ENCODE measurements at regions of chr3 and their contacts with region 1.

Region 1: DNA sequence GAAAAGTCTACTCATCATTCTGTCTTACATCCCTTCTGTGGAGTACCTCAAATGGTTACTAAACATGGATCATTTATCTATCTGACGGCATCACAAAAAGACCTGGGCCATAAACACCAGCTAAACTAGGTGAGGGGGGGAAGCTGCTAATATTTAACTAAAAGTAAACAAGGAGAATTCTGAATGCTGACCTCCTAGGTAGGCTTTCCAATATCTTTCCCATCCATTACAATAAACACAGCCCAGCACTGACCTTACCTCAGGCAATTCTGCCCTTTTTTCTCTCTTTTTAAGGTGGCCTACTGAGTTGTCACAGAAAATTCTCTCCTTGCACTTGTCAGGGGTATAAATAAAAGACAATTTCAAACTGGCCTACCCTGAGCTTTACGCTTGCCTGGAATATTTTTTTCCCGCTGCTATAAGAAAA is 33.1 kb downstream of the USF3 start:
- DNase-seq: peak; percentile 43 to 67
- H3K4me3 ChIP-seq: no peak overlapping the region
- H3K4me3 Mint-ChIP-seq: peak overlapping the region; percentile 39
- H3K27ac Mint-ChIP-seq: peak overlapping the region; percentile 75
- H3K4me1 ChIP-seq: peaks cover 30% of the 10 kb centered on the region
- H3K4me1 Mint-ChIP-seq: peaks cover 20% of the 10 kb centered on the region
- H3K27me3 ChIP-seq: no peaks in the 10 kb centered on the region
- H3K27me3 Mint-ChIP-seq: no peaks in the 10 kb centered on the region
- CTCF ChIP-seq: no peak

Region 2: DNA sequence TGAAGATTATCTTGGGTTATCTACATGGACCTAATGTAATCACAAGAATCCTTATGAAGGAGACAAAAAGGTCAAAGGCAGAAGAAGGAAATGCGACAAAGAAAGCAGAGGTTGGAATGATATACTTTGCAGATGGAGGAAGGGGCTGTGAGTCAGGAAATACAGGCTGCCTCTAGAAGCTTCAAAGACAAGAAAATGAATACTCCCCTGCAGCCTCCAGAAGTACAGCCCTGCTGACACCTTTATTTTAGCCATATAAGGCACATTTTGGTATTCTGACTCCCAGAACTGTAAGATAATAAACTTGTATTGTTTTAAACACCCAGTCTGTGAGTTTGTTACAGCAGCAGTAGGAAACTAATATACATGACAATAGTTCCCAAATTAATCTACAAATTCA is 72.4 kb before region 1 on chr3:
- CTCF ChIA-PET with region 1: no interaction called
- POLR2A ChIA-PET with region 1: no interaction called
- intact Hi-C with region 1: no loop called
- DNase-seq: no peak
- H3K4me3 ChIP-seq: no peak overlapping the region
- H3K4me3 Mint-ChIP-seq: no peak overlapping the region
- H3K27ac Mint-ChIP-seq: no peak overlapping the region
- H3K4me1 ChIP-seq: no peaks in the 10 kb centered on the region
- H3K4me1 Mint-ChIP-seq: no peaks in the 10 kb centered on the region
- H3K27me3 ChIP-seq: no peaks in the 10 kb centered on the region
- H3K27me3 Mint-ChIP-seq: no peaks in the 10 kb centered on the region
- CTCF ChIP-seq: no peak

Region 3: GRCh38 chr3:113676261-113676660 is 12.9 kb after region 1 on chr3:
- CTCF ChIA-PET with region 1: no interaction called
- POLR2A ChIA-PET with region 1: no interaction called
- intact Hi-C with region 1: no loop called
- DNase-seq: no peak
- H3K4me3 ChIP-seq: no peak overlapping the region
- H3K4me3 Mint-ChIP-seq: no peak overlapping the region
- H3K27ac Mint-ChIP-seq: no peak overlapping the region
- H3K4me1 ChIP-seq: no peaks in the 10 kb centered on the region
- H3K4me1 Mint-ChIP-seq: no peaks in the 10 kb centered on the region
- H3K27me3 ChIP-seq: no peaks in the 10 kb centered on the region
- H3K27me3 Mint-ChIP-seq: no peaks in the 10 kb centered on the region
- CTCF ChIP-seq: no peak

Region 4: DNA sequence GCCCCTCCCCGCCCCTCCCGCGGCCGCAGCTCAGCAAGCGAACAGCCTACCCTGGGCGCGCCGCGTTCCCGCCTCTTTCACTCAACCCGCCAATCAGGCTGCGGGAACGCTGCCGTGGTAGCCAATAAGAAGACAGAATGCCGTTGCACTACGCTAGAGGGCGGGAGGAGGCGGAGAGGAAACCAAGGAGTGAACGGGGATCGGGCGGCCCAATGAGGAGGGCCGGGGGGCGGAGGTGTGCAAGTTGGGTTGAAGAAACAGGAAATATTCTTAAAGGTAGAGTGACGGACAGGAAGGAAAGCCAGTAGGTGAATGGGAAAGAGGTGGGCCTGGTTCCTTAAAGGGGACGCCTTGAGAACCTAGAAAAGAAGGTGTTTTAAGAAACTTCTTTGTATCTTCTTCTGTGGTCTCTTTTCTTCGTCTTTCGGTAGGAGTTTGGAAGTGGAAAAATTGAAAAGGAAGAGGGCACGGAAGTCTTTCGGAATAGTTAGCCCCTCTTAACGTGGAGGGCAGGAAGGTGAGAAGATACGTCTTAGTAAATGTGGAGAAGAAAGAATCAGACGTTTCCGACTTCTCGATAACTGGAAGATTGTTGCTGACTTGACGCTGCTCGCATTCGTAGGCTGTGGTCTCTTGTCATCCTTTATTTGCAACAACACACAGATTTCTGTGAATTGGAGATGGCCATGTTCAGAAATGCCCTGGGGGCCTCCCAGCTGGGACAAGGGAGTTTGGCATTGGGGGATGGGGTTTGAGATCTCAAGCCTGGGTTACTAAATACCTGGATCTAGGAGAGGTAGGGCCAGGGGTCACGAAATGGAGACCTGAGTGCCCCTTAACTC is 33.5 kb after region 1 on chr3:
- CTCF ChIA-PET with region 1: no interaction called
- POLR2A ChIA-PET with region 1: interaction called, 3 read pairs
- intact Hi-C with region 1: loop called (anchors 1 kb)
- DNase-seq: peak; percentile 99
- H3K4me3 ChIP-seq: peak overlapping the region; percentile 84
- H3K4me3 Mint-ChIP-seq: no peak overlapping the region
- H3K27ac Mint-ChIP-seq: no peak overlapping the region
- H3K4me1 ChIP-seq: peaks cover 18% of the 10 kb centered on the region
- H3K4me1 Mint-ChIP-seq: no peaks in the 10 kb centered on the region
- H3K27me3 ChIP-seq: no peaks in the 10 kb centered on the region
- H3K27me3 Mint-ChIP-seq: no peaks in the 10 kb centered on the region
- CTCF ChIP-seq: no peak

Region 5: GRCh38 chr3:113947372-113948014 is 284.2 kb after region 1 on chr3 and contains the start of gene ZDHHC23:
- CTCF ChIA-PET with region 1: no interaction called
- POLR2A ChIA-PET with region 1: no interaction called
- intact Hi-C with region 1: no loop called
- DNase-seq: peak; percentile 80 to 87
- H3K4me3 ChIP-seq: peak within 1 kb of the TSS; percentile 90
- H3K4me3 Mint-ChIP-seq: peak within 1 kb of the TSS; percentile 80
- H3K27ac Mint-ChIP-seq: no peak within 1 kb of the TSS
- H3K4me1 ChIP-seq: no peaks in the 10 kb centered on the region
- H3K4me1 Mint-ChIP-seq: peaks cover 7% of the 10 kb centered on the region
- H3K27me3 ChIP-seq: no peaks in the 10 kb centered on the region
- H3K27me3 Mint-ChIP-seq: peaks cover 15% of the 10 kb centered on the region
- CTCF ChIP-seq: no peak
- total RNA-seq, gene ZDHHC23: 9.0 and 9.1 TPM in 2 replicates

Measured in Caco-2 (cell line).